Transverse colon (tissue), 4 donors: ENCODE measurements at regions of chr19 and their contacts with region 1.

Region 1: GRCh38 chr19:23971598-23971997 is 56.9 kb downstream of the ZNF726 start:
- DNase-seq: no peak
- H3K4me3 ChIP-seq: peak overlapping the region in 1 of 4 donors; percentile 7
- H3K27ac ChIP-seq: no peak overlapping the region
- H3K4me1 ChIP-seq: no peaks in the 10 kb centered on the region
- H3K27me3 ChIP-seq: peaks cover 14% of the 10 kb centered on the region
- CTCF ChIP-seq: no peak
- EP300 ChIP-seq: no peak
- POLR2A ChIP-seq: no peak

Region 2: DNA sequence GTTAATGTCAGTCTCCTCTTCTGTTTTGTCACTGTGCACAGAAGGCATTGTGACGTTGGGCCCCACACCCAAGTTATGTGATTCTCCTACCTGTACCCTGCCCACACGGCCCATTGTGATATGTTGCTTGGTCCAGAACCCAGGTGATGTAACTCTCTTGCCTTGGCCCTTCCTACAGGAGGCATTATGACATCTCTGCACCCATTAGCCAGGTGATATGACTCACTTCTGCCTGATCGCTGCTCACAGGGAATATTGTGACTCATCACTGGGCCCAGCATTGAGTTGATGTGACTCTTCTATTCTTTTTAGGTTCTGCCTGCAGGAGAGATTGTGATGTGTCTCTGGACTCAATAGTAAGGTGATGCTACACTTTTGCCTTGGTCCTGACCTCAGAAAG is 511.0 kb before region 1 on chr19:
- in situ Hi-C with region 1: loop called in 3 of 4 experiments (anchors 5 to 10 kb)
- intact Hi-C with region 1: no loop called
- DNase-seq: no peak
- H3K4me3 ChIP-seq: no peak overlapping the region
- H3K27ac ChIP-seq: no peak overlapping the region
- H3K4me1 ChIP-seq: no peaks in the 10 kb centered on the region
- H3K27me3 ChIP-seq: no peaks in the 10 kb centered on the region
- CTCF ChIP-seq: no peak
- EP300 ChIP-seq: no peak
- POLR2A ChIP-seq: no peak

Region 3: GRCh38 chr19:23470873-23471545 is 500.6 kb before region 1 on chr19:
- in situ Hi-C with region 1: loop called in 3 of 4 experiments (anchors 5 to 10 kb)
- intact Hi-C with region 1: no loop called
- DNase-seq: peak; percentile 34
- H3K4me3 ChIP-seq: peak overlapping the region in 3 of 4 donors; percentile 14 to 30 (median 17)
- H3K27ac ChIP-seq: no peak overlapping the region
- H3K4me1 ChIP-seq: no peaks in the 10 kb centered on the region
- H3K27me3 ChIP-seq: peaks cover 14% of the 10 kb centered on the region
- CTCF ChIP-seq: no peak
- EP300 ChIP-seq: no peak
- POLR2A ChIP-seq: no peak

Region 4: DNA sequence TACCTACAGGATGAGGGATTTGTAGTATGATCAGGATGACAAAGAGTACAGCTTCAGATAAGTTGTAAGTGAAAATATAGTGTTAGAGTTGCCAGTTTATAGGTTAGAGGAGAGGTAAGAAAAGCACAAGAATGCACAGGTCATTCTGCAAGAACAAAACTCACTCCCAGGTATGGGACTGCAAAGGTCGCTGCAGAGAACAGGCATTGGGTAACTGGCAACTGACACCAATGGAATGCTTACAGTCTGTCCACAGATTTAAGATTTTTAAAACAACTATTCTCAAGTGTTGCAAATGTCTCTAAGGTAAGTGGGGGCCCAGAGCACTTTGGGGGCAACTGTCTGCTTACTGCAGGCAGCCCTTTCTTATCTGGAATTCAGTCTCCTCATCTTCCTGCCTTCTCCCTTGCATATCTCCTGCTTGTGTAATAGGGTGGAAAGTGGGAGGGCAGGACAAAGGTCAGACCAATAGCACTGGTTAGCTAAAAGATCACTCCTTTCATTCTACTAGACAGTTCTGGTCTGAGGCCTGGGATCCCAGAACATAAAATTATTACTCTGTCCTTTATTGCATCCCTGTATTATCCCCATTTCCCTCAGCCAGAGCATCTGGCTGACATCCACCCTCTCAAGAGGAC is 99.2 kb before region 1 on chr19:
- in situ Hi-C with region 1: loop called in 3 of 4 experiments (anchors 5 kb)
- intact Hi-C with region 1: loop called (anchors 5 kb)
- DNase-seq: no peak
- H3K4me3 ChIP-seq: no peak overlapping the region
- H3K27ac ChIP-seq: no peak overlapping the region
- H3K4me1 ChIP-seq: no peaks in the 10 kb centered on the region
- H3K27me3 ChIP-seq: no peaks in the 10 kb centered on the region
- CTCF ChIP-seq: no peak
- EP300 ChIP-seq: no peak
- POLR2A ChIP-seq: no peak